Activated CD4-positive, alpha-beta memory T cell treated with anti-CD3 and anti-CD28 coated beads for 36 hours (primary cell): ENCODE measurements at regions of chr1 and their contacts with region 1.

Region 1: DNA sequence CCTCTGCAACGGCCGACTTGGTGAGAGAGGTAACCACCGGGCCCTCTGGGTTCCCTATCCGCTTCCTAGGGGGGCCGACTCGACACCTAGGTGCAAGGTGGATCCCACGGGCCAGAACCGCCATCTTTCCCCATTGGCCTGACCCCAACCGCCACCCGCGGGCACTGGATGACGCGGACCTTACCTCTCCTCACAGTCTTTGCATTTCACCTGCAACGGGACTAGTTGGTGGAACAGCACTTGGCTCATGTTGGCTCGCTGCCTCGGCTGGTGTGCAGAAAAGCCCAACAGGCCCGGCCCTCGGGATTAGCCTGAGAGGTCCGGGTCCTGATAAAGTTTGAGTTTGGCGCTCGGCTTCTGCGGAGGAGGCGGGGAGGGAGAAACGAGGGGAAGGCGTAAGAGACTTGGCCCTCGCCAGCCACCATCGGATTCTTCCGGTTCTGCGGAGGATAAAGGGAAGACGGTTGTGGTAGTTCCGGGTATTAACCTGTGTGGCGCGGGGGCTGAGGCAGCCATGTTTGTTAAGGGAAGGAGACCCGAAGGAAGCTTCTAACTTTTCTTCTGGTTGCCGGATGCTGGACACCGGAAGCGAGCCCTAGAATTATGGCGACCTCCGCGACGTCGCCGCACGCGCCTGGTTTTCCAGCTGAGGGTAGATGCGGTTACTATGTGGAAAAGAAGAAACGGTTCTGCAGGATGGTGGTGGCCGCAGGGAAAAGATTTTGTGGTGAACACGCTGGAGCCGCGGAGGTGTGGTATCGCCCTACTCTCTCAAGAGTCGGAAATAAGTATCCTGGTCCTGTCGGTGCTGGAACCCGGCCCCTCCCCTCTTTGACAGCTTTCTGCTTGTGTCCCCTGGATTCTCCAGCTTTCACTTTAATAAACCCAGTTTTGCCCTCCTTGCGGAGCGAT is at the starts of genes SASS6 and TRMT13:
- DNase-seq: peak; percentile 97
- H3K4me3 Mint-ChIP-seq: peak within 1 kb of the TSS; percentile 96
- H3K27ac Mint-ChIP-seq: peak within 1 kb of the TSS; percentile 93
- H3K4me1 Mint-ChIP-seq: peaks cover 39% of the 10 kb centered on the region
- H3K27me3 Mint-ChIP-seq: no peaks in the 10 kb centered on the region
- total RNA-seq, gene SASS6: 11.5 to 12.0 TPM
- total RNA-seq, gene TRMT13: 17.5 TPM

Region 2: GRCh38 chr1:99849744-99850458 is 282.9 kb before region 1 on chr1 and contains the start of gene AGL:
- CTCF ChIA-PET with region 1: no interaction called
- POLR2A ChIA-PET with region 1: no interaction called
- intact Hi-C with region 1: loop called (anchors 1 kb)
- DNase-seq: peak; percentile 92
- H3K4me3 Mint-ChIP-seq: peak within 1 kb of the TSS; percentile 94
- H3K27ac Mint-ChIP-seq: peak within 1 kb of the TSS; percentile 82
- H3K4me1 Mint-ChIP-seq: peaks cover 27% of the 10 kb centered on the region
- H3K27me3 Mint-ChIP-seq: no peaks in the 10 kb centered on the region
- total RNA-seq, gene AGL: 19.0 to 19.7 TPM

Region 3: GRCh38 chr1:100249537-100250257 is 116.9 kb after region 1 on chr1 and contains the start of gene DBT:
- CTCF ChIA-PET with region 1: no interaction called
- POLR2A ChIA-PET with region 1: no interaction called
- intact Hi-C with region 1: loop called (anchors 1 kb)
- DNase-seq: peak; percentile 96
- H3K4me3 Mint-ChIP-seq: no peak within 1 kb of the TSS
- H3K27ac Mint-ChIP-seq: no peak within 1 kb of the TSS
- H3K4me1 Mint-ChIP-seq: peaks cover 21% of the 10 kb centered on the region
- H3K27me3 Mint-ChIP-seq: no peaks in the 10 kb centered on the region
- total RNA-seq, gene DBT: 11.4 to 11.7 TPM

Region 4: DNA sequence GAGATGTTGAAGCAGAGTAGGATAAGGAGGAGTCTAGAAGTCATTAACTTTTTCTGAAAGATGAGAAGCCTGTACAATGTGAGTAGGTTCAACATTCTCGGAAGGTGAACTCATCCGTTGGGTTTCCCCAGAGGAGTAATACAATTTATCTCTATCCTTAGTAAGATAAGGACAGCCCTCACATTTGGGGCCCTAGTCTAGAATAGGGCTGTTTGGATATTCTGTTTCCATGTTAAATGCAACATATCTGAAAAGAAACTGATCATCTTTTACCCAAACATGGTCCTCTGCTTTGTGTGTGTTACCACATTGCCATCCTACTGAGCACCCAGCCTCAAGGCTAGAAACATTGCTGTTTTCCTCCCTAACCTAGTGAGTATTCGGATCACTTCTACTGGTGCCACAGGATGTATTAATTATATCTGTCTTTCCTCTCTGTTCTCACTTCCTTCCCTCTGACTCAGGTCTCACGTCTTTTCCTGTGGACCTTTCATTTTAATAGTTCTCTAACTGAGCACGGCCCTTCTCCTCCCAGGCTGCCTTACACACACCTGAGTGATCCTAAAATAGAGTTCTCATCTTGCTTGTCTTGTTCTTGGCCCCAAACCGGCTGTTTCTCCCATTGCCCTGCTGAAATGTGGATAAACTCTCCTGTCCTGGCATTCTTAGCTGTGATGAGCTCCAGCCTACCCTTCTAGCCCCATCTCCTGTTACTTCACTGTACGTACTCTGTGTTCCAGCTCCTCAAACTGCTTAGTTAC is 311.2 kb after region 1 on chr1:
- CTCF ChIA-PET with region 1: no interaction called
- POLR2A ChIA-PET with region 1: interaction called, 3 read pairs
- intact Hi-C with region 1: loop called (anchors 2 kb)
- DNase-seq: peak; percentile 65
- H3K4me3 Mint-ChIP-seq: peak overlapping the region; percentile 82
- H3K27ac Mint-ChIP-seq: peak overlapping the region; percentile 98
- H3K4me1 Mint-ChIP-seq: peaks cover 84% of the 10 kb centered on the region
- H3K27me3 Mint-ChIP-seq: no peaks in the 10 kb centered on the region